B cell (primary cell): ENCODE measurements at regions of chr16 and their contacts with region 1.

Region 1: GRCh38 chr16:25111403-25112166 is at the start of gene LCMT1:
- DNase-seq: peak; percentile 96
- ATAC-seq: peak; percentile 87
- H3K4me3 ChIP-seq: peak within 1 kb of the TSS; percentile 66 to 94 (median 70)
- H3K4me3 Mint-ChIP-seq: peak within 1 kb of the TSS; percentile 97
- H3K27ac ChIP-seq: peak within 1 kb of the TSS; percentile 43 to 66
- H3K27ac Mint-ChIP-seq: peak within 1 kb of the TSS; percentile 93
- H3K4me1 ChIP-seq: peaks cover 20 to 33% of the 10 kb centered on the region in 2 donors
- H3K4me1 Mint-ChIP-seq: peaks cover 54% of the 10 kb centered on the region
- H3K27me3 ChIP-seq: no peaks in the 10 kb centered on the region
- H3K27me3 Mint-ChIP-seq: no peaks in the 10 kb centered on the region
- CTCF ChIP-seq: no peak
- total RNA-seq, gene LCMT1: 42.0 and 45.1 TPM in 2 replicates

Region 2: DNA sequence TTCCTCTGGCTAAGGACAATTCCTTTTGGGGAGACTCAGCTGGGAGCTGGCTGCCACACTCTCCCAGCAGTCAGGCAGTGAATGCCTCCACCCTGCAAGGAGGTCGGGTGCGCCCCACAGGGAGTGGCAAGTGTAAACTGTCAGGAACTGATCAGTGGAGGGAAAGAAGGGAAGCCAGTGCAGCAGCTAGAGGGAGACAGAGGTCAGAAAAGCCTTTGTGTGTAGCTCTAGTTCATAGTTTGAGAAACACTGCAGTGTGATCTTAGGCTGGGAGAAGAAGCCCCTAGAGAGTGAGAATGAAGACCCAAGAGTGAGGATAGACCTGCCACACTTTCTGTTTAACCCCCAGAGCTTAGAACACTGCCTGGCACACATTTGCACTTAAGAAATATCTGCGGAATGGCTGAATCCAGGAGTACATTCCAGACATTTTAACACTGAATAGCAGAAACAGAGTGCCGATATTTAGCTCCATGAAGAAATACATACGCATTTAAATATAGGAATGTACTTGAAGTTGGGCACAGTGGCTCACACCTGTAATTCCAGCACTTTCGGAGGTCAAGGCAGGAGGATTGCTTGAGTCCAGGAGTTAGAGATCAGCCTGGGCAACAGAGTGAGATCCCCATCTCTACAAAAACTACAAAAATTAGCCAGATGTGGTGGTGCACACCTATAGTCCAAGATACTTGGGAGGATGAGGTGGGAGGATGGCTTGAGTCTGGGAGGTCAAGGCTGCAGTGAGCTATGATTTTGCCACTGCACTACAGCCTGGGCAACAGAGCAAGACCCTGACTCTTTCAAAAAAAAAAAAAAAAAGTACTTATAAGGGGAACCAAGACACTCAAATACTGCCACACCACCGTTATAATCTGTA is 276.9 kb before region 1 on chr16:
- CTCF ChIA-PET with region 1: no interaction called
- POLR2A ChIA-PET with region 1: no interaction called
- intact Hi-C with region 1: loop called (anchors 5 kb)
- DNase-seq: no peak
- ATAC-seq: no peak
- H3K4me3 ChIP-seq: no peak overlapping the region
- H3K4me3 Mint-ChIP-seq: no peak overlapping the region
- H3K27ac ChIP-seq: no peak overlapping the region
- H3K27ac Mint-ChIP-seq: no peak overlapping the region
- H3K4me1 ChIP-seq: no peaks in the 10 kb centered on the region
- H3K4me1 Mint-ChIP-seq: no peaks in the 10 kb centered on the region
- H3K27me3 ChIP-seq: no peaks in the 10 kb centered on the region
- H3K27me3 Mint-ChIP-seq: no peaks in the 10 kb centered on the region
- CTCF ChIP-seq: no peak

Region 3: GRCh38 chr16:24975428-24975889 is 136.1 kb before region 1 on chr16:
- CTCF ChIA-PET with region 1: interaction called, 5 read pairs
- POLR2A ChIA-PET with region 1: no interaction called
- intact Hi-C with region 1: loop called (anchors 5 kb)
- DNase-seq: peak; percentile 51
- ATAC-seq: peak; percentile 56
- H3K4me3 ChIP-seq: no peak overlapping the region
- H3K4me3 Mint-ChIP-seq: peak overlapping the region; percentile 57
- H3K27ac ChIP-seq: peak overlapping the region in 1 of 2 donors; percentile 79
- H3K27ac Mint-ChIP-seq: peak overlapping the region; percentile 87
- H3K4me1 ChIP-seq: peaks cover 62 to 73% of the 10 kb centered on the region in 2 donors
- H3K4me1 Mint-ChIP-seq: peaks cover 76% of the 10 kb centered on the region
- H3K27me3 ChIP-seq: no peaks in the 10 kb centered on the region
- H3K27me3 Mint-ChIP-seq: no peaks in the 10 kb centered on the region
- CTCF ChIP-seq: no peak

Region 4: GRCh38 chr16:25031441-25032307 is 79.9 kb before region 1 on chr16:
- CTCF ChIA-PET with region 1: no interaction called
- POLR2A ChIA-PET with region 1: no interaction called
- intact Hi-C with region 1: loop called (anchors 1 kb)
- DNase-seq: peak; percentile 95
- ATAC-seq: peak; percentile 98
- H3K4me3 ChIP-seq: peak overlapping the region; percentile 70 to 91 (median 74)
- H3K4me3 Mint-ChIP-seq: peak overlapping the region; percentile 85
- H3K27ac ChIP-seq: peak overlapping the region; percentile 76 to 81
- H3K27ac Mint-ChIP-seq: peak overlapping the region; percentile 87
- H3K4me1 ChIP-seq: peaks cover 29 to 47% of the 10 kb centered on the region in 2 donors
- H3K4me1 Mint-ChIP-seq: peaks cover 45% of the 10 kb centered on the region
- H3K27me3 ChIP-seq: no peaks in the 10 kb centered on the region
- H3K27me3 Mint-ChIP-seq: no peaks in the 10 kb centered on the region
- CTCF ChIP-seq: no peak

Region 5: GRCh38 chr16:25060920-25061319 is 50.7 kb before region 1 on chr16:
- CTCF ChIA-PET with region 1: interaction called, 84 read pairs
- POLR2A ChIA-PET with region 1: interaction called, 7 read pairs
- intact Hi-C with region 1: loop called (anchors 1 kb)
- DNase-seq: peak; percentile 75
- ATAC-seq: peak; percentile 98
- H3K4me3 ChIP-seq: peak overlapping the region in 1 of 5 experiments; percentile 8
- H3K4me3 Mint-ChIP-seq: peak overlapping the region; percentile 49
- H3K27ac ChIP-seq: peak overlapping the region; percentile 72 to 93
- H3K27ac Mint-ChIP-seq: peak overlapping the region; percentile 92
- H3K4me1 ChIP-seq: peaks cover 42 to 58% of the 10 kb centered on the region in 2 donors
- H3K4me1 Mint-ChIP-seq: peaks cover 46% of the 10 kb centered on the region
- H3K27me3 ChIP-seq: no peaks in the 10 kb centered on the region
- H3K27me3 Mint-ChIP-seq: no peaks in the 10 kb centered on the region
- CTCF ChIP-seq: no peak

Region 6: DNA sequence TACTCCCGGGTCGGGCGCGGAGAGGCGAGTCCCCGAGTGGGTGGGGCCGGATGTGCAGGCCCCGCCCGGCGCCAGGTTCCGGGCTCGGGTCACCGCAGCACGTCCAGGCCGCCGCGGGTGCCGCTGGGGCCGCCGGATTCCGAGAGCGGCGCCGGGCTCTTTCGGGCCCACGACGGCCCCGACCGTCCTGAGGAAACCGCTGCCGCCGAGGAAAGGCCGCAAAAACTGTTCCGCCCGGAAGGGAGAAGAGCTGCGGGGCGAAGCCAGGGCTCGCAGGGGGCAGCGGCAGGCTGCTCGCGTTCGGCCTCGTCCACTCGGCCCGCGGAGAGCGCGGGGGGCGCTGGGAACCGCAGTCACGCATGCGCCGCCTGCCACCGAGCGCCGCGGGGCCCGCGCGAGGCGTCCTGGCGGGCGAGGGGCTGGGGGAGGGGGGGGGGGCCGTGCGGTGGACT is 145.9 kb after region 1 on chr16 and contains the start of gene ZKSCAN2:
- CTCF ChIA-PET with region 1: no interaction called
- POLR2A ChIA-PET with region 1: no interaction called
- intact Hi-C with region 1: loop called (anchors 2 kb)
- DNase-seq: peak; percentile 91
- ATAC-seq: peak; percentile 90
- H3K4me3 ChIP-seq: peak within 1 kb of the TSS; percentile 57 to 81 (median 79)
- H3K4me3 Mint-ChIP-seq: peak within 1 kb of the TSS; percentile 98
- H3K27ac ChIP-seq: peak within 1 kb of the TSS; percentile 79 to 92
- H3K27ac Mint-ChIP-seq: peak within 1 kb of the TSS; percentile 98
- H3K4me1 ChIP-seq: peaks cover 20 to 28% of the 10 kb centered on the region in 2 donors
- H3K4me1 Mint-ChIP-seq: peaks cover 38% of the 10 kb centered on the region
- H3K27me3 ChIP-seq: no peaks in the 10 kb centered on the region
- H3K27me3 Mint-ChIP-seq: no peaks in the 10 kb centered on the region
- CTCF ChIP-seq: no peak
- total RNA-seq, gene ZKSCAN2: 9.0 and 9.1 TPM in 2 replicates

Region 7: GRCh38 chr16:25311049-25311448 is 199.5 kb after region 1 on chr16:
- CTCF ChIA-PET with region 1: no interaction called
- POLR2A ChIA-PET with region 1: no interaction called
- intact Hi-C with region 1: no loop called
- DNase-seq: no peak
- ATAC-seq: no peak
- H3K4me3 ChIP-seq: no peak overlapping the region
- H3K4me3 Mint-ChIP-seq: no peak overlapping the region
- H3K27ac ChIP-seq: no peak overlapping the region
- H3K27ac Mint-ChIP-seq: no peak overlapping the region
- H3K4me1 ChIP-seq: no peaks in the 10 kb centered on the region
- H3K4me1 Mint-ChIP-seq: no peaks in the 10 kb centered on the region
- H3K27me3 ChIP-seq: no peaks in the 10 kb centered on the region
- H3K27me3 Mint-ChIP-seq: peaks cover 9% of the 10 kb centered on the region
- CTCF ChIP-seq: no peak